GM23248 (cell line): ENCODE measurements at regions of chr10 and their contacts with region 1.

Region 1: DNA sequence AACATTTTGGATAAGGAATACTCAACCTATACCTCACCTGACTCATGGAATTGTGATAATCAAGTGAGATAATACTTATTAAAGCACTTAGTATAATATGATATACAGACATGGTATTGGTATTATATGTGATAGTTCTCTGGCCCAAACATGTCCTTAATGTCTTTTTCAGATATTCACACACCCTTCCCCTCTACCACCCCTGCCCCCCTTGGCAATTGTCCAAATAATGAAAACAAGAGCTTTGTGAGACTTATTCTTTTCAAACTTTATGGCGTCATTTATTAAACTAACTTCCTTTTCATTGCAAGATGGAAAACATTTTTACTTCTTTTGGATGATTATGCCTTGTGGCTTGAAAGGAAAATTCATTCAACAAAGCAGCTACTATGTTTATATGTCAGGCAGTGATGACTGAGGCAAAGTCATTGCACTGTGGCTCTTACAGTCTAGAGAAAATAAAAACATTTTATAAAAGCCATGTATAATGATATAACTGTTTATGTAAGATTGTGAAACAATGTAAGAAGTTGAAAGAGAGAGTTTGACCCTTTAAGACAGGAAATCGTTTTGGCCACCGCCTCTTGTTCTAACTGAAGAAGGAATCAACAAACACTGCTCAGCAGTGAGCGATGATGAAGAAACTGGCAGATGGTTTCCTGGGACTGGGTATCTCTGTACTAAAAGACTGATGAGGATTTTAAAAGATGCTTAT is 27.4 kb downstream of the MINPP1 start:
- DNase-seq: no peak
- H3K4me3 ChIP-seq: no peak overlapping the region
- H3K27ac ChIP-seq: no peak overlapping the region
- H3K4me1 ChIP-seq: peaks cover 9% of the 10 kb centered on the region
- H3K27me3 ChIP-seq: no peaks in the 10 kb centered on the region

Region 2: GRCh38 chr10:85696893-85697292 is 1835.2 kb before region 1 on chr10:
- in situ Hi-C with region 1: no loop called
- DNase-seq: no peak
- H3K4me3 ChIP-seq: no peak overlapping the region
- H3K27ac ChIP-seq: no peak overlapping the region
- H3K4me1 ChIP-seq: no peaks in the 10 kb centered on the region
- H3K27me3 ChIP-seq: no peaks in the 10 kb centered on the region

Region 3: DNA sequence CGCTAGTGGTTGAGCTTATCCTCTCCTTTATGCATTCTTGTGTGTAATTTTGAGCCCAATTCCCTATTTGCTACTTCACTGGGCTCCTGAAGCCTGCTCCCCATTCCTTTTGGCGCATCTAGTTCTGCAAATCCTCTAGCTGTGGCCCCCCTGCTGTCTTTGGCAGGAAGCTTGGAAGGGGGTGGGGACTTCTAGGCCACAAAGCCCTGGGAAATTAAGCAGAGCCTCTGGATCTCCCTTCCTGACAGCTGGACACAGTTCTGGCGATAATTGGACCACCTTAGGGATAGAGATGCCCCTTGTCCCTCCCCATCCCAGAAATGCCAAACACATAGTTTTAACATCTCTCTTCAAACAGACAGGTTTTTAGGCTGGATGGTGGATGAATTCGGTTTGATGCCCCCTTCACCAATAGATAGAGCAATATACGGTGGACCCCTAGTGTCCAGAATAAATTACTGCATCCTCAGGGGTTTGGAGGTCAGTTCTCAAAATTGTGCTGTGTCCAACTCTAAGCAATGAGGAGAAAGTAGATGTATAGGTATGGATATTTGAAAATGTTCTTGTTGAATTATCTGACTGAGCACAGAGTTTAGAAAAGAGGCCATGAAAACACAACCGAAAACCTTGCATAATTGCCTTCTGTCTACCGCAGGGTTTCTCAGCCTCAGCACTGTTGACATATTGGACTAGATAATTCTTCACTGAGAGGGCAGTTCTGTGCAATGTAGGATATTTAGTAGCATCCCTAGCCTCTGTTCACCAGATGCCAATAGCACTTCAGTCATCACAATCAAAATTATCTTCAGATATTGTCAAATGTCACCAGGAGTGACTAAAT is 203.1 kb after region 1 on chr10:
- in situ Hi-C with region 1: loop called (anchors 10 kb)
- DNase-seq: peak; percentile 62
- H3K4me3 ChIP-seq: no peak overlapping the region
- H3K27ac ChIP-seq: no peak overlapping the region
- H3K4me1 ChIP-seq: no peaks in the 10 kb centered on the region
- H3K27me3 ChIP-seq: no peaks in the 10 kb centered on the region